Caco-2 (cell line): ENCODE measurements at regions of chr5 and their contacts with region 1.

Region 1: DNA sequence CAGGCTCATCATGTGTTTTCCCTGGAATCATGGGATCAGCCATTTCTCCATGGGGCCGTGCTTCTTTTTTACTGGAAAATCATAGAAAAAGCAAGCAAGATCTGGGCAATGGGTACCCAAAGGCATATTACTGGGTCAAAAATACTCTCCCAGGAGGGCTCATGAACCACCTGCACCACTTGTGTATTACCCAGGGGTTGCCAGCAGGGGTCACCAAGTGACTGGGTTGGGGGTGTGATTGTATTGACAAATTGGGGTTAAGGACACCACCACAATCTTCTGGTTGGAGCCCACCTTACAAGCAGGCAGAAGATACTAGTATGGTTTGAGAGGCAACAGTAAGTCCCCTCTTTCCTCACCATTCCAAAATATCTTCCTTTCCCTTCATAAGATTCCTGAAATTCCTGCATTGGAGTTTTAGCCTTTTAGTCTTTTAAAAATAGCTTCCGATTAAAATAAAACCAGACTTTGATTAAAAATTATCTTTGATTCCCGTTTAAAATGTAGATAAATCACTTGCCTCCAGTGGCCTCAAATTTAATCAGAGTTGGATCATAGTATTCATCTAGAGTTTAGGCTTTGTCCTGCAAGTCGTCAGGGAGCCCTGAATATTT is 603.3 kb downstream of the KIF4B start:
- DNase-seq: peak; percentile 58 to 75
- H3K4me3 ChIP-seq: no peak overlapping the region
- H3K4me3 Mint-ChIP-seq: no peak overlapping the region
- H3K27ac Mint-ChIP-seq: no peak overlapping the region
- H3K4me1 ChIP-seq: no peaks in the 10 kb centered on the region
- H3K4me1 Mint-ChIP-seq: no peaks in the 10 kb centered on the region
- H3K27me3 ChIP-seq: no peaks in the 10 kb centered on the region
- H3K27me3 Mint-ChIP-seq: peaks cover 13% of the 10 kb centered on the region
- CTCF ChIP-seq: peak; percentile 86 to 91

Region 2: DNA sequence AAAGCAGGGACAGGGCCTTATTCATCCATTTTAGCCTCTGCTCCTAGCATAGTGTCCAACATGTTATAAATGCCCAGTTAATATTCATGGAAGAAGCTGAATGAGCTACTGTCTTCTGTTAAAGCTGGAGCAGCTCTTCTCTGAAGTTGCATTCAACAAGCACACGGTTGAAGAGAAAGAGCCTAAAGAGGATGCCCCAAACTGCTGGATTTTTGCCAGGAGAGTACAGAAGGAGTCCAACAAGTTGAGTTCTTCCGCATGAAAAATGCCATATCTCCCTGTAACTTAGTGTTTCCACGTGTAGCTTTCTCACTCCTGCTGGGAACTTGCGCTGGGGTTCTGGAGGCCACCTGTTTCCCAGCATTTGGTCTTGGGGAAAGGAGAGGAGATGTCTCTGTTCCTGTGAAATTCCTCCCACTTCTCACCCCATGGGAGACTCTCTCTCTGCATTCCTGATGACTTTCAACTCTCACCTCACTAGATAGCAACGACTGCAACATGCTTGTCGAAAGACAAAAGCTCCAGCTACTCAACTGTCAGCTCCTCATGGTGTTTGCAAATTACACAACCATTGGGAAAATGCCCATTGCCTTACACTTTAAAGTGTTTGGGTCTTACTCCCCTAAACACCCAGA is 480.6 kb before region 1 on chr5:
- CTCF ChIA-PET with region 1: no interaction called
- POLR2A ChIA-PET with region 1: no interaction called
- intact Hi-C with region 1: loop called (anchors 10 kb)
- DNase-seq: no peak
- H3K4me3 ChIP-seq: no peak overlapping the region
- H3K4me3 Mint-ChIP-seq: no peak overlapping the region
- H3K27ac Mint-ChIP-seq: no peak overlapping the region
- H3K4me1 ChIP-seq: no peaks in the 10 kb centered on the region
- H3K4me1 Mint-ChIP-seq: no peaks in the 10 kb centered on the region
- H3K27me3 ChIP-seq: no peaks in the 10 kb centered on the region
- H3K27me3 Mint-ChIP-seq: peaks cover 28% of the 10 kb centered on the region
- CTCF ChIP-seq: no peak

Region 3: GRCh38 chr5:155700333-155700732 is 83.4 kb after region 1 on chr5:
- CTCF ChIA-PET with region 1: no interaction called
- POLR2A ChIA-PET with region 1: no interaction called
- intact Hi-C with region 1: loop called (anchors 1 kb)
- DNase-seq: peak in 1 of 2 experiments; percentile 17
- H3K4me3 ChIP-seq: no peak overlapping the region
- H3K4me3 Mint-ChIP-seq: no peak overlapping the region
- H3K27ac Mint-ChIP-seq: no peak overlapping the region
- H3K4me1 ChIP-seq: no peaks in the 10 kb centered on the region
- H3K4me1 Mint-ChIP-seq: no peaks in the 10 kb centered on the region
- H3K27me3 ChIP-seq: no peaks in the 10 kb centered on the region
- H3K27me3 Mint-ChIP-seq: no peaks in the 10 kb centered on the region
- CTCF ChIP-seq: peak in 1 of 2 experiments; percentile 44

Region 4: DNA sequence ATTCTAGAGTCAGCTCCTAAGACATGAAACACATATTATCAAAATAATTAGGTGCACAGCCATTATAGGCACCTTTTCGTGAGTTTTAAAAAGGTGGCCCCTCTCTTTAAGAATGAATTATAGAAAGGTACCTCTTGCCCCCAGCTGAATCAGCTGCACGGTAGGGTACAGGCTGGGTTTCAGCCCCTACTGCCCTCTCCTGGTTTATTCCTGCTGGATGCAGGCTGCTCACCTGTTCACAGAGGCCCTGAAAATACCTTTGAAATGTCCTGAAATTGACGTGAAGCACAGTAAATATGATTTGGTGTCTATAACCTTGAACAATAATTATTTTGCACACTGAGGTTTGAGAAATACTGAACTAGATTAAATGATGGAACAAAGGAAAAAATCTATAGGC is 205.3 kb after region 1 on chr5:
- CTCF ChIA-PET with region 1: no interaction called
- POLR2A ChIA-PET with region 1: no interaction called
- intact Hi-C with region 1: loop called (anchors 1 kb)
- DNase-seq: peak in 1 of 2 experiments; percentile 24
- H3K4me3 ChIP-seq: no peak overlapping the region
- H3K4me3 Mint-ChIP-seq: no peak overlapping the region
- H3K27ac Mint-ChIP-seq: no peak overlapping the region
- H3K4me1 ChIP-seq: no peaks in the 10 kb centered on the region
- H3K4me1 Mint-ChIP-seq: no peaks in the 10 kb centered on the region
- H3K27me3 ChIP-seq: no peaks in the 10 kb centered on the region
- H3K27me3 Mint-ChIP-seq: peaks cover 9% of the 10 kb centered on the region
- CTCF ChIP-seq: peak in 1 of 2 experiments; percentile 23

Region 5: GRCh38 chr5:155906046-155906445 is 289.2 kb after region 1 on chr5:
- CTCF ChIA-PET with region 1: no interaction called
- POLR2A ChIA-PET with region 1: no interaction called
- intact Hi-C with region 1: loop called (anchors 1 kb)
- DNase-seq: no peak
- H3K4me3 ChIP-seq: no peak overlapping the region
- H3K4me3 Mint-ChIP-seq: no peak overlapping the region
- H3K27ac Mint-ChIP-seq: no peak overlapping the region
- H3K4me1 ChIP-seq: no peaks in the 10 kb centered on the region
- H3K4me1 Mint-ChIP-seq: no peaks in the 10 kb centered on the region
- H3K27me3 ChIP-seq: no peaks in the 10 kb centered on the region
- H3K27me3 Mint-ChIP-seq: no peaks in the 10 kb centered on the region
- CTCF ChIP-seq: peak in 1 of 2 experiments; percentile 23

Region 6: DNA sequence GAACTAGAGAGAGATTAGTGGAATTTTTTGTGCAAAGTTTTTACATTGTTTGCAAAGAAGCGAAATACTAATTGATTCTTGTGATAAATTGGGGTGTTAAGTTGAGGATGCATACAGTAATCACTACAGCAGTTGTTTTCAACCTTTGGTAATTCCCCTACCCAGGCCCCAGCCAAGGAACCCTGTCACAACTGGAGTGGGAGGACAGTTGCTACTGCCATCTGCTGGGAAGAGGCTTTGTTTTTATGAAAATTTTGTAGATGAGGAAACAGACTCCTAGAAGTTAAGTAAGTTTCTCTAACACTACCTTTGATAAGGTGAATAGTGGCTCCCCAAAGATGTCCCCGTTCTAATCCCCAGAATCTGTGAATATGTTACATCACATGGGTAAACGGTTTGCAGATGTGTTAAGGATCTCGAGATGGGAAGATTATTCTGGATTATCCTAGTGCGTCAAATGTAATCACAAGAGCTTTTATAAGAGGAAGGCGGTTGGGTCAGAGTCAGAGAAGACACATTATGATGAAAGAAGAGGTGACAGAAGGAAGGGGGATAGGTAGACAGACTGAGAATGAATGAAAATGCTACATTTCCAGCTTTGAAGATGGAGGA is 1199.2 kb after region 1 on chr5:
- CTCF ChIA-PET with region 1: no interaction called
- POLR2A ChIA-PET with region 1: no interaction called
- intact Hi-C with region 1: loop called (anchors 2 kb)
- DNase-seq: peak; percentile 46 to 47
- H3K4me3 ChIP-seq: no peak overlapping the region
- H3K4me3 Mint-ChIP-seq: no peak overlapping the region
- H3K27ac Mint-ChIP-seq: no peak overlapping the region
- H3K4me1 ChIP-seq: 0 out of 2 replicates have a peak, but pooled peaks cover 6% of the 10 kb centered on the region
- H3K4me1 Mint-ChIP-seq: peaks cover 11% of the 10 kb centered on the region
- H3K27me3 ChIP-seq: no peaks in the 10 kb centered on the region
- H3K27me3 Mint-ChIP-seq: no peaks in the 10 kb centered on the region
- CTCF ChIP-seq: peak; percentile 58 to 60

Region 7: DNA sequence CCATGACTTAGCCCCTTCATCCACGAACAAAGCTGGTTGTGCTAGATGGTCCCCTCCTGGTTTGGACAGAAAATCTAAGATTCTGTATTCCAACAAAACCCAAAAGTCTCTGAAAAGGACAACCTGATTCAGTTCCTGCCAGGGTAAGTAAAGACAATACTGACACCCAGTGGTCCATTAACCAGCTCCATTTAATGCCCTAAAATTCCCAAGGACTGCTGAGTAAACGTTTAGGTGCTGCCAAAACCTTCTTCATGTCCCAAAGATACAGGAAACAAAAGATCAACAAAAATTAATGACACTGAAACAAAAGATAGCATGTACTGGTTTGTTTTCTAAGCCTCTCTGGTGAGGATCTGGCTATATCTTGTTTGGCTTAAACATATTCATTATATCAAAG is 1207.9 kb after region 1 on chr5:
- CTCF ChIA-PET with region 1: no interaction called
- POLR2A ChIA-PET with region 1: no interaction called
- intact Hi-C with region 1: loop called (anchors 2 kb)
- DNase-seq: peak in 1 of 2 experiments; percentile 49
- H3K4me3 ChIP-seq: no peak overlapping the region
- H3K4me3 Mint-ChIP-seq: no peak overlapping the region
- H3K27ac Mint-ChIP-seq: no peak overlapping the region
- H3K4me1 ChIP-seq: 0 out of 2 replicates have a peak, but pooled peaks cover 9% of the 10 kb centered on the region
- H3K4me1 Mint-ChIP-seq: peaks cover 13% of the 10 kb centered on the region
- H3K27me3 ChIP-seq: no peaks in the 10 kb centered on the region
- H3K27me3 Mint-ChIP-seq: no peaks in the 10 kb centered on the region
- CTCF ChIP-seq: peak; percentile 44 to 55